Activated naive CD8-positive, alpha-beta T cell treated with anti-CD3 and anti-CD28 coated beads, Interleukin-2, amount 10 ng/mL, durations not matched to agents 7 days and 5 days (primary cell): ENCODE measurements at regions of chr1 and their contacts with region 1.

Region 1: DNA sequence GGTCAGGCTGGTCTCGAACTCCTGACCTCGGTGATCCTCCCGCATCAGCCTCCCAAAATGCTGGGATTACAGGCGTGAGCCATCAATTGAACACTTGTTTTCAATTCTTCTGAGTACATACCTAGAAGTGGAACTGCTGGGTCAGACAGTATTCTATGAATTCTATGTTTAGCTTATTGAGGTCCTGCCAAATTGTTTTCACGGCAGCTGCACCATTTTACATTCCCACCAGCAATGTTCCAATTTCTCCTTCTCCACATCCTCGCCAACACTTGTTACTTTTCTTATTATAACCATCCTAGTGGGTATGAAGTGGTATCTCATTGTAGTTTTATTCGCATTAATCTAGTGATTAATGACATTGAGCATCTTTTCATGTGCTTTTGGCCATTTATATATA is 49.9 kb downstream of the PTP4A2 start:
- DNase-seq: no peak
- ATAC-seq: no peak
- H3K4me3 Mint-ChIP-seq: no peak overlapping the region
- H3K27ac Mint-ChIP-seq: peak overlapping the region; percentile 21
- H3K4me1 Mint-ChIP-seq: peaks cover 20% of the 10 kb centered on the region
- H3K27me3 Mint-ChIP-seq: no peaks in the 10 kb centered on the region

Region 2: DNA sequence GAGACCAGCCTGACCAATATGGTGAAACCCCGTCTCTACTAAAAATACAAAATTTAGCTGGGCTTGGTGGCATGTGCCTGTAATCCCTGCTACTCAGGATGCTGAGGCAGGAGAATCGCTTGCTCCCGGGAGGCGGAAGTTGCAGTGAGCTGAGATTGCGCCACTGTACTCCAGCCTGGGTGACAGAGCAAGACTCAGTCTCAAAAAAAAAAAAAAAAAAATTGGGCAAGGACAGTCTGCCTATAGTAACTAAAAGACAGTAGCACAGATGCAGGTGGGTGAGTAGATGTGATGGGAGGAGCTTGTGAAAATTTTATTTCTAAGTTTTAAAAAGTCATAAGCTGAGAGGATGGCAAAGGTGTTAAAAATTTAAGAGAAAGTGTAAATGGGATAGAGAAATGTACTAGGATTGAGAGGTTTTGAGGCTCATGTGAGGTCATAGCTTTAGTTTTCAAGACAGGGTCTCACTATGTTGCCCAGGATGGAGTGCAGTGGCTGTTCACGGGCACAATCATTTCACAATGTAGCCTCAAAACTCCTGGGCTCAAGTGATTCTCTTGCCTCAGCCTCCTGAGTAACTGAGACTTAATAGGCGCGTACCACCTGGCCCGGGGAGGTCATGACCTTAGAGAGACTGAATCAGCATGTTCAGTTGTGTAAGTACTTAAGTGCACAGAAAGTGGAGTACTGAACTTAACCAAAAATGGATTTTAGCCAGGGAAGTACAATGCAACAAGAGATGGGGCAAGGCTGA is 16.2 kb after region 1 on chr1:
- POLR2A ChIA-PET with region 1: interaction called, 22 read pairs
- DNase-seq: no peak
- ATAC-seq: no peak
- H3K4me3 Mint-ChIP-seq: no peak overlapping the region
- H3K27ac Mint-ChIP-seq: peak overlapping the region; percentile 37
- H3K4me1 Mint-ChIP-seq: peaks cover 21% of the 10 kb centered on the region
- H3K27me3 Mint-ChIP-seq: no peaks in the 10 kb centered on the region

Region 3: DNA sequence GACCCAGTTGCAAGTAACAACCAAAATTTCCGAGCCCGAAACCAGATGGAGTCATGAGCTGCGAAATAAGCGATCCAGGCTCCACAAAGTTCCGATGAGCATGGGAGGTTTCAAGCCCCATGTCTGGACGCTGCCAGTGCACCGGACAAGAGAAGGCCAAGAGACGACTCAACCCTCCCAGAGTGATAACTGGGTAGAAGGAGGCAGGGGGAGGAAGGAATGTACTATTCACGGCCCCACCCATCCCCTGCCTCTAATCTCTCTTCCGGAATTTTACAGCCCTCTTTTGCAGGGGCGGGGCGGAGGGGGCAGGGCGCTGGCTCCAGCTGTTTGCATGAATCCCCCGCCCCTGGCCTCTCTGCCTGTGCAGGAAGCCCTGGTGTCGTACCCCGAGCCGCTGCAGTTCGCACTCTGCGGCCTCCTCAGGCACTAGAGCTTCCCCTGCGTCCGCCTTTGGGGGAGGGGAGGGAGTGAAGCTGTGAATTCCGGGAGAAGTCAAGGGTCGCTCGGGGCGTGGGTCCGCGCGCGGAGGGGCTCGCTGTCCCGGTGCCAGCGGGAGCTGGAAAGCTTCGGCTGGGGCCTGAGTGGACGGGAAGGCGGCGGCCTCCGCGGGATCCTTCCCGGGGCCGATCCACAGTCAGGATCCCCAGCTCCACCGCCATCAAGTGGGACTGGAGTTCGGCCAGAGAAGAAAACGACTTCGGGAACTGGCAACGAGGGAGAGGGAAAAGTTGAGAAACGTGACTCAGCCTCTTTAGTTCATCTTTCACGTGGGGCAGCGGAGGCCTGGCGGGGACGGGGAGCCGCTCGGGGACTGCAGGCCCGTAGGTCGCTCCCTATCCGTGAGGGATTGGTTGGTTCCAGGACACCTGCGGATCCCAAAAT is 56.2 kb after region 1 on chr1:
- POLR2A ChIA-PET with region 1: no interaction called
- DNase-seq: peak; percentile 91
- ATAC-seq: peak; percentile 80
- H3K4me3 Mint-ChIP-seq: peak overlapping the region; percentile 90
- H3K27ac Mint-ChIP-seq: peak overlapping the region; percentile 97
- H3K4me1 Mint-ChIP-seq: peaks cover 51% of the 10 kb centered on the region
- H3K27me3 Mint-ChIP-seq: no peaks in the 10 kb centered on the region